Aorta (tissue), 5 donors: ENCODE measurements at regions of chr5 and their contacts with region 1.

Region 1: GRCh38 chr5:140401362-140402257 is at the start of gene ANKHD1:
- DNase-seq: peak; percentile 99
- ATAC-seq: peak; percentile 98
- H3K4me3 ChIP-seq: peak within 1 kb of the TSS; percentile 66 to 85
- H3K27ac ChIP-seq: peak within 1 kb of the TSS; percentile 17 to 94
- H3K4me1 ChIP-seq: peaks cover 0 to 3% of the 10 kb centered on the region in 2 donors
- H3K27me3 ChIP-seq: no peaks in the 10 kb centered on the region
- total RNA-seq, gene ANKHD1: 112 to 138 TPM

Region 2: GRCh38 chr5:140174465-140175366 is 226.9 kb before region 1 on chr5 and contains the start of gene CYSTM1:
- intact Hi-C with region 1: no loop called
- DNase-seq: peak; percentile 97 to 99
- ATAC-seq: peak; percentile 97
- H3K4me3 ChIP-seq: peak within 1 kb of the TSS; percentile 79 to 80
- H3K27ac ChIP-seq: peak within 1 kb of the TSS; percentile 17 to 34
- H3K4me1 ChIP-seq: no peaks in the 10 kb centered on the region
- H3K27me3 ChIP-seq: no peaks in the 10 kb centered on the region
- total RNA-seq, gene CYSTM1: 44.7 to 56.5 TPM

Region 3: DNA sequence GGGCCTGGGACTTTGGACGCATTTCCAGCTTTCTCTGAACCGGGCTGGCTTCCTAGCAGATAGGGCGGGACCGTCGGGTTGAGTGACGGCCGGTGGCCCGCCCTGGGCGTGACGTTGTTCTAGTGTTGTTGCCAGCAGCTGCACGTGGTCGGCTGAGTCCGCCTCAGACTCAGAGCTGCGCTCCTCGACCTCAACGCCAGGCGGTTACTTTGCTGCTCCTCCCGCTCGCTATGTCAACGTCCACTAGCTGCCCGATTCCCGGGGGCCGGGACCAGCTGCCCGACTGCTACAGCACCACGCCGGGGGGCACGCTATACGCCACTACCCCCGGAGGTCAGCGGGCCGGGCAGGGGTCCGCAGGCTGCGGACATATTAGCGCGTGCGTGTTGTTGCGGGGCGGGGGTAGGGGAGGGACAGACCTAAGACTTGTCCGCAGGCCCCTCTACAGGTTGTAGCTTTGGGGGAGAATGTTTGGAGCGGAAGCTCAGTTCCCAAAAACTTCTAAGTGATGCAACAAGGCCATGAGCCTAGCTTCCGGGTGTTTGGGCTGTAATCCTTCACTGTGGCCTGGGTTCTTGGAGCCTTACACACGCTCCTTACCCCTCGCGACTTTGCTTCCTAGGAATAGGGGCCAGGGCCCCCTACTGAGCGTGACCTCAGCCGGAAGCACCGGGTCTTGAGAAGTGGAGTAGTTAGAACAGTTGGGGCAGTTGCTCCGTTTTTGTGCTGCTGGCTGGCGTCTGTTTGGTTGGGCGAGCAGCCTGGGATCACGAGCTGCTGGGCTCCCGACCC is 146.1 kb after region 1 on chr5 and contains the start of gene EIF4EBP3:
- intact Hi-C with region 1: loop called in 1 of 2 experiments (anchors 5 kb)
- DNase-seq: peak; percentile 99
- ATAC-seq: peak; percentile 98
- H3K4me3 ChIP-seq: peak within 1 kb of the TSS; percentile 14 to 27
- H3K27ac ChIP-seq: peak within 1 kb of the TSS; percentile 65 to 83
- H3K4me1 ChIP-seq: peaks cover 0 to 4% of the 10 kb centered on the region in 2 donors
- H3K27me3 ChIP-seq: no peaks in the 10 kb centered on the region
- total RNA-seq, gene EIF4EBP3: 5.4 to 14.2 TPM

Region 4: GRCh38 chr5:140639148-140639979 is 237.8 kb after region 1 on chr5 and contains the start of gene TMCO6:
- intact Hi-C with region 1: loop called in 1 of 2 experiments (anchors 5 kb)
- DNase-seq: peak; percentile 99
- ATAC-seq: peak; percentile 100
- H3K4me3 ChIP-seq: peak within 1 kb of the TSS; percentile 27 to 58
- H3K27ac ChIP-seq: peak within 1 kb of the TSS in 1 of 2 donors; percentile 18
- H3K4me1 ChIP-seq: no peaks in the 10 kb centered on the region
- H3K27me3 ChIP-seq: no peaks in the 10 kb centered on the region
- total RNA-seq, gene TMCO6: 8.6 to 11.9 TPM